Caco-2 (cell line): ENCODE measurements at regions of chr3 and their contacts with region 1.

Region 1: GRCh38 chr3:196609343-196609775 is 30.1 kb upstream of the NRROS start:
- DNase-seq: peak; percentile 89 to 91
- H3K4me3 ChIP-seq: no peak overlapping the region
- H3K4me3 Mint-ChIP-seq: no peak overlapping the region
- H3K27ac Mint-ChIP-seq: no peak overlapping the region
- H3K4me1 ChIP-seq: peaks cover 17% of the 10 kb centered on the region
- H3K4me1 Mint-ChIP-seq: peaks cover 6% of the 10 kb centered on the region
- H3K27me3 ChIP-seq: no peaks in the 10 kb centered on the region
- H3K27me3 Mint-ChIP-seq: no peaks in the 10 kb centered on the region
- CTCF ChIP-seq: peak; percentile 87 to 92

Region 2: GRCh38 chr3:196159952-196160804 is 449.2 kb before region 1 on chr3:
- CTCF ChIA-PET with region 1: no interaction called
- POLR2A ChIA-PET with region 1: no interaction called
- intact Hi-C with region 1: no loop called
- DNase-seq: no peak
- H3K4me3 ChIP-seq: no peak overlapping the region
- H3K4me3 Mint-ChIP-seq: no peak overlapping the region
- H3K27ac Mint-ChIP-seq: no peak overlapping the region
- H3K4me1 ChIP-seq: no peaks in the 10 kb centered on the region; the same call in 1 of the 2 replicates
- H3K4me1 Mint-ChIP-seq: no peaks in the 10 kb centered on the region
- H3K27me3 ChIP-seq: no peaks in the 10 kb centered on the region
- H3K27me3 Mint-ChIP-seq: no peaks in the 10 kb centered on the region
- CTCF ChIP-seq: no peak

Region 3: DNA sequence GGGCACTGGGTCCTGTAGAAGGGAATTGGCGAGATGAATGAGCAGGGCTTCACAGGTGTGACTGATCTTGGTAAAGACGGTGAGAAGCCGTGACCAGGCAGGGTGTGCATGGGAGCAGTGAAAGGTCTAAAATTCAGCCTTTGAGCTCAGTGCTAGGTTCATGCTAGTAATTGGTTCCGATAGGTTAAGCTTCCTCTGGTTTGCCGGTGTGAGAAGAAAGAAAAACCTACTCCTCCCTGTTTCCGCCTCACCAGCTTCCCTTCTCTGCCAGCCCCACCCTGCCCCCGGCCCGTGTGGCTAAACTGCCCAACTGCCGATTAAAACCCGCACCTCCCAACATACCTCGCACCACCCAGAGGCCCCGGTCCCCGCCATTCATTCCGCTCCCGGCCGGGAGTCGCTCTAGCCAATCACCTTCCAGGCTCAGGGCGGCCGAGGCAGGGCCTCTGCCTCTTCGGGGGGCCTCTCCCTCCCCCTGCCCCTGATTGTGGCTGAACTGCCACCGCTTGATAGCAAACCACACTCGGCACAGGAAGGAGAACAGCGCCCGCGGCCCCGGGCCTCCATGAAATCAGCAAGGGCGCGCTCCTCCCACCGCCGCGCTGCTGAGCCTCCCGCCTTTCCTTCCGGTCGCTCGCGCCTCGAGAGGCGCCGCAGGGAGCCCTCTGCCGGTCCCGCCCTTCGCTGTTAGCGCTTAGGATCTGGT is 22.8 kb after region 1 on chr3:
- CTCF ChIA-PET with region 1: interaction called, 5 read pairs
- POLR2A ChIA-PET with region 1: no interaction called
- intact Hi-C with region 1: loop called (anchors 1 kb)
- DNase-seq: peak; percentile 89 to 91
- H3K4me3 ChIP-seq: peak overlapping the region; percentile 57
- H3K4me3 Mint-ChIP-seq: peak overlapping the region; percentile 94
- H3K27ac Mint-ChIP-seq: peak overlapping the region; percentile 97
- H3K4me1 ChIP-seq: peaks cover 6% of the 10 kb centered on the region; the same call in 1 of the 2 replicates
- H3K4me1 Mint-ChIP-seq: peaks cover 13% of the 10 kb centered on the region
- H3K27me3 ChIP-seq: no peaks in the 10 kb centered on the region
- H3K27me3 Mint-ChIP-seq: no peaks in the 10 kb centered on the region
- CTCF ChIP-seq: peak in 1 of 2 experiments; percentile 67

Region 4: GRCh38 chr3:196677353-196677752 is 68.0 kb after region 1 on chr3:
- CTCF ChIA-PET with region 1: interaction called, 11 read pairs
- POLR2A ChIA-PET with region 1: no interaction called
- intact Hi-C with region 1: no loop called
- DNase-seq: peak in 1 of 2 experiments; percentile 15
- H3K4me3 ChIP-seq: no peak overlapping the region
- H3K4me3 Mint-ChIP-seq: no peak overlapping the region
- H3K27ac Mint-ChIP-seq: no peak overlapping the region
- H3K4me1 ChIP-seq: no peaks in the 10 kb centered on the region
- H3K4me1 Mint-ChIP-seq: no peaks in the 10 kb centered on the region
- H3K27me3 ChIP-seq: no peaks in the 10 kb centered on the region
- H3K27me3 Mint-ChIP-seq: no peaks in the 10 kb centered on the region
- CTCF ChIP-seq: no peak

Region 5: DNA sequence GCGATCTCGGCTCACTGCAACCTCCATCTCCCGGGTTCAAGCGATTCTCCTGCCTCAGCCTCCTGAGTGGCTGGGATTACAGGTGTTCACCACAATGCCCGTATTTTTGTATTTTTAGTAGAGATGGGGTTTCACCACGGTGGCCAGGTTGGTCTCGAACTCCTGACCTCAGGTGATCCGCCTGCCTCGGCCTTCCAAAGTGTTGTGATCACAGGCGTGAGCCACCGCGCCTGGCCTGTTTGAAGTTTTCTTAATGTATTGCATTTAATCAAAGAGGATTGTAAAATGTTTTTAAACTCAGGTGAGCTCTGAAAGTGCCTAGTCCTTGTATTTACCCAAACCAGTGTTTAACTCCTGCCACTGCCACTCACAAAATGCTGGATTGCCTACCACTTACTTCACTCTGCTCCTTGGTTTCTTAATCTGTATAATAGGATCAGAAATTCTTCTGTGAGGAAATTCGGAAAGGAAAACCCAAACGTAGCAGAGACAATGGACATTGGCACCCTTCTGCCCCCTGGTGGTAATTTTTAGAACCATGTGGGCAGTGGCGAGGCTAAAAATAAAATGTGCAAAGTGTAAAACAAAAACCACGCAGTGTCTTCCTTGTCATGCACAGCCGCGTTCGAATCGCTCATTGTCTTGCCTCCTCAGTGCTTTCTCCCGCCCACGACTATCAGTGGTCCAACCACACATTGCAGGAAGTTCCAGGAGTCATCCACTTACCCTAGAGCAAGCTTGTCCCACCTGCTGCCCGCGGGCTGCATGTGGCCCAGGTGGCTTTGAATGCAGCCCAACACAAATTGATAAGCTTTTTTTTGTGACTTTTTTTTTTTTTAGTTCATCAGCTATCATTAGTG is 75.4 kb after region 1 on chr3:
- CTCF ChIA-PET with region 1: interaction called, 18 read pairs
- POLR2A ChIA-PET with region 1: no interaction called
- intact Hi-C with region 1: loop called (anchors 1 kb)
- DNase-seq: peak in 1 of 2 experiments; percentile 70
- H3K4me3 ChIP-seq: no peak overlapping the region
- H3K4me3 Mint-ChIP-seq: no peak overlapping the region
- H3K27ac Mint-ChIP-seq: no peak overlapping the region
- H3K4me1 ChIP-seq: no peaks in the 10 kb centered on the region
- H3K4me1 Mint-ChIP-seq: no peaks in the 10 kb centered on the region
- H3K27me3 ChIP-seq: no peaks in the 10 kb centered on the region
- H3K27me3 Mint-ChIP-seq: no peaks in the 10 kb centered on the region
- CTCF ChIP-seq: peak; percentile 81